Heart right ventricle (tissue), 16 donors: ENCODE measurements at regions of chr1 and their contacts with region 1.

Region 1: GRCh38 chr1:227131193-227131592 is 187.1 kb downstream of the CDC42BPA start:
- DNase-seq: no peak
- ATAC-seq: peak in 3 of 8 donors; percentile 20 to 62 (median 34)
- H3K4me3 ChIP-seq: no peak overlapping the region
- H3K27ac ChIP-seq: no peak overlapping the region
- H3K4me1 ChIP-seq: peaks cover 0 to 13% (median 0%) of the 10 kb centered on the region in 9 donors
- H3K27me3 ChIP-seq: no peaks in the 10 kb centered on the region
- CTCF ChIP-seq: peak; percentile 14 to 66 (median 53)

Region 2: DNA sequence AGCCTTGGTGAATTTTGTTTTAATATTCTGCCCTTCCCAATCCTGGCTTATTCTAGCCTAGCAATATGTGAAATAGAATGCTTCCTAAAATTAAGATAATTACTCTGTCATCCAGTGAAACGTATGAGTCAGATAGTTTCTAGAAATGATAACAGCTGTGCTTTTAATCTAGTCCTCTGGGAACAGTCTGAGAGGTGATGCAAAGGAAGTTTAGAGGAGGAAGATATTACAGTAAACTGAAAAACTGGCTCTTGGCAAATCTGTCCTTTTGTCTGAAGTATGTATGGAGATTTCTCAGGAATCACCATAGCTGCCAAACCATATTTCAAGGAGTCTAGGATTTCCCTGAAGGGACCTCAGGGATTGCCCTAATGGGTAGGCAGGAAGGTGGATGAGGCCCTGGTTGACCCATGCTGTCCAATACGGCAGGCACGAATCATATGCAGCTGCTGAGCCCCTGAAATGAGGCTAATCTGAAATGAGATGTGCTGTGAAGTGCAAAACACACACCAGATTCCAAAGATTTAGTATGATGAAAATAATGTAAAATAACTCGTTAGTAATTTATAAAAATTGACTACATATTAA is 1632.5 kb before region 1 on chr1:
- intact Hi-C with region 1: loop called in 1 of 10 experiments (anchors 10 kb)
- DNase-seq: no peak
- ATAC-seq: no peak
- H3K4me3 ChIP-seq: no peak overlapping the region
- H3K27ac ChIP-seq: peak overlapping the region in 1 of 10 donors; percentile 29
- H3K4me1 ChIP-seq: peaks cover 0 to 6% (median 0%) of the 10 kb centered on the region in 9 donors
- H3K27me3 ChIP-seq: no peaks in the 10 kb centered on the region
- CTCF ChIP-seq: no peak

Region 3: GRCh38 chr1:227449051-227449450 is 317.9 kb after region 1 on chr1:
- intact Hi-C with region 1: loop called in 1 of 10 experiments (anchors 10 kb)
- DNase-seq: no peak
- ATAC-seq: peak in 1 of 8 donors; percentile 26
- H3K4me3 ChIP-seq: no peak overlapping the region
- H3K27ac ChIP-seq: no peak overlapping the region
- H3K4me1 ChIP-seq: peaks cover 0 to 16% (median 7%) of the 10 kb centered on the region in 9 donors
- H3K27me3 ChIP-seq: peaks cover 0 to 20% (median 3%) of the 10 kb centered on the region in 7 donors
- CTCF ChIP-seq: peak in 7 of 9 donors; percentile 33 to 56 (median 40)

Region 4: GRCh38 chr1:227558732-227559262 is 427.6 kb after region 1 on chr1:
- intact Hi-C with region 1: no loop called
- DNase-seq: no peak
- ATAC-seq: no peak
- H3K4me3 ChIP-seq: no peak overlapping the region
- H3K27ac ChIP-seq: no peak overlapping the region
- H3K4me1 ChIP-seq: peaks cover 0 to 10% (median 0%) of the 10 kb centered on the region in 9 donors
- H3K27me3 ChIP-seq: peaks cover 0 to 49% (median 42%) of the 10 kb centered on the region in 7 donors
- CTCF ChIP-seq: no peak